Head of caudate nucleus (tissue), 42 donors: ENCODE measurements at regions of chrX and their contacts with region 1.

Region 1: DNA sequence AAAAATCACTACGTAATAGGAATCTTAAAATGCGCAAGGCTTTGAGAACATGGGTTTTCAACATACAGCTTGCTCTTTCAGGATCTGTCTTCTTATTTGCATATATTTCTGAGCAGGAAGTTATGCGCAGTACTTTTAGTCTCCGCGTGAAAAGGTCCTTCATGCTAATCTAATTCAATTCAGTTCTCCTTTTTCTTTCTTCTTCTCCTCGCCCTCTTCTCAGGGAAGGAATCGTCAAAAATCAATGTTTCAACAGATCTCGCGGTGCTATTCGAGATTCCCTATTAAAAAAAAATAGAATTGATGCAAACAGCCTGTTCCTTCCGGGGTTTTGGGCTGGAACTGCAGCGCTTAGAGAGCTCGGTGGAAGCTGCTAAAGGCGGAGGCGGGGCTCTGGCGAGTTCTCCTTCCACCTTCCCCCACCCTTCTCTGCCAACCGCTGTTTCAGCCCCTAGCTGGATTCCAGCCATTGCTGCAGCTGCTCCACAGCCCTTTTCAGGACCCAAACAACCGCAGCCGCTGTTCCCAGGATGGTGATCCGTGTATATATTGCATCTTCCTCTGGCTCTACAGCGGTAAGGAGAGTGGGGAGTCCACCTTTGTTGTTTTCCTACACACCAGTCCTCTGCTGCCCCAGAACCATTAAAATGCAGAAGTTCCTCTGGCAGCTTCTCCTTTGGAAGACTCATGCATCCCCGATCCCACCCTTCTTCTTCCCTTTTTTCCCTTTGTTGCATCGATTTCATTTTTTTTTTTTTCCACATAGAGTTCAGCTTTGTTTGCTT is at the starts of genes HMGN5 and SH3BGRL:
- DNase-seq: peak; percentile 47 to 88 (median 74)

Region 2: DNA sequence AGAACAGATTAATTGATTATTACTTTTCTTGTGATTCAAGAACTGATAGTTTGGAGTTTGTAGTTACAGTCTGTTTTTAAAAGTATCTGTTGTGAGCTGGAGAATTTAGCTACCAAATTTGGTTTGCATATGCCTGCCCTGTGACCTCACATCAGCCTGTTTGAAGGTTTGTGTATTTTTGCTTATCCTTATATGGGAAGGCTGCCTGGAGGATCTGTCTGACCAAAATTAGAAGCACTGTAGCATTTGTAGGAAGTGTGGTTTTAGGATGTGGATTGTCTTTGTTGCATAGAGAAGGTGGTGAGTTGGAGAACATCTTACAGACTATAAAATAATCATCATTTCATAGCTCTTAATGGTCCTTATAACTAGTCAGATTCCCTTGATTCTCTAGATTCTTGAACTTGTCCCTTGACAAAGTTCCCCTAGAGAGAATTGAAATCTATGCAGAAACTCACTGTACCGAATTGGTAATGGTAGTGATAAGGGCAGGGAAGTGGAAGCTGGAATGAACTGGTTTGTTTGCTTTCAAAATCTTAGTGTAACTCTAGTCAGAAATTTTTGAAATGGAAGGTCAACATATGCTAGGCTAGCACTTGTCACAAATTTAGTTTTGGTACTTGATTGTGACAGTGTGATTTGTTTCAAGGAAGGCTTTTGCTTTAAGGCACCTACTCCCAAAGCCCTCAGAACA is 57.3 kb after region 1 on chrX:
- intact Hi-C with region 1: loop called (anchors 10 kb)
- DNase-seq: no peak

Region 3: DNA sequence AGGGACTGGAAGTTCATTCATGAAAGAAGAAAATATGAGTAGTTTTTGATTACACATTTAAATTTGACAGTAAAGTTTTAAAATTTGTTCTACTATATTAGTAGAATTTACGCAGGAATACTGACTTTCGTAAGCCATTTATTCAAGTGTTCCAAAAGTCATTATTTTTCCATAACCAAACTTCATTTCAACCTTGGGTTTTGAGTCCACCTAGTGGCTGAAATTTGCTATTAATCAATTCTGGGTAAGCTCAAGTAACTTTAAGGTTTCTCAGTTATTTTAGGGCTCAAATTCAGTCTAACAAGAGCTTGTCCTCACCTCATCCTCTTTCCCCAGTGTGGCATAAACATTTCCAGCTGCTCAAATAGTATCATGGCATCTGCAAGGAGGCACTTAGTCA is 175.5 kb after region 1 on chrX:
- intact Hi-C with region 1: loop called (anchors 10 kb)
- DNase-seq: peak in 2 of 42 donors; percentile 1 to 11

Region 4: GRCh38 chrX:81577028-81577427 is 375.2 kb after region 1 on chrX:
- intact Hi-C with region 1: no loop called
- DNase-seq: no peak